HepG2 (cell line): ENCODE measurements at regions of chr1 and their contacts with region 1.

Region 1: DNA sequence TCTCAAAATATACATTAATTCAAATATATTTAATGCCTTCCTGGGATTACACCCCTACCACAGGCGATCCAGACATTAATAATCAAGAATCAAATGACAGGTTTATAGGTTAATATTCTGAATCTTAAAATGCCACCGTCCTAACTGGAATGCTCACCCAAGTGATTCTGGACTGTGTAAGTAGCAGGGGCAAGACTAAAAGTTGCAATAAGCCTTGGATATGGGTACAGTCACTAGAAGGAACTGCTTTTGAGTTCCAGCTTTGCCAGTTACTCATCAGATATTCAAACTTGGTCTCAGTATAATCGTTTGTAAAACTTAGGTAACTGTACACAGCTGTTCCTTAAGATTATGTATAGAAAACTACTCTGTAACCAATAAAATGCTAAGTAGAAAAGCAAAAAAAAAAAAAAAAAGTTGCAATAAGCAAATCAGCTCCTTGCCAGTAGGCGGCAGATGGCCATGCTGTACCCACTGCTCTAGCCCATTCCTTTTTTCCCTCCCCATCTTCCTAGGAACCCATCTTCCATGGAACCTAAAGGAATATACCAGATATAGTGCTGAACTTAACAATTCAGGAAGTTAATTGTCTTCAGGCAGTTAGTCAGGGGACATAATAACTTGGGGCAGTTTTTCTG is 10.5 kb downstream of the RO60 start:
- DNase-seq: no peak
- ATAC-seq: peak; percentile 80
- H3K4me3 ChIP-seq: no peak overlapping the region
- H3K27ac ChIP-seq: no peak overlapping the region
- H3K4me1 ChIP-seq: no peaks in the 10 kb centered on the region
- H3K27me3 ChIP-seq: no peaks in the 10 kb centered on the region
- CTCF ChIP-seq: 0 out of 2 replicates have a peak, but pooled peaks have one; percentile 18
- EP300 ChIP-seq: no peak
- POLR2A ChIP-seq: no peak
- RAD21 ChIP-seq: no peak

Region 2: DNA sequence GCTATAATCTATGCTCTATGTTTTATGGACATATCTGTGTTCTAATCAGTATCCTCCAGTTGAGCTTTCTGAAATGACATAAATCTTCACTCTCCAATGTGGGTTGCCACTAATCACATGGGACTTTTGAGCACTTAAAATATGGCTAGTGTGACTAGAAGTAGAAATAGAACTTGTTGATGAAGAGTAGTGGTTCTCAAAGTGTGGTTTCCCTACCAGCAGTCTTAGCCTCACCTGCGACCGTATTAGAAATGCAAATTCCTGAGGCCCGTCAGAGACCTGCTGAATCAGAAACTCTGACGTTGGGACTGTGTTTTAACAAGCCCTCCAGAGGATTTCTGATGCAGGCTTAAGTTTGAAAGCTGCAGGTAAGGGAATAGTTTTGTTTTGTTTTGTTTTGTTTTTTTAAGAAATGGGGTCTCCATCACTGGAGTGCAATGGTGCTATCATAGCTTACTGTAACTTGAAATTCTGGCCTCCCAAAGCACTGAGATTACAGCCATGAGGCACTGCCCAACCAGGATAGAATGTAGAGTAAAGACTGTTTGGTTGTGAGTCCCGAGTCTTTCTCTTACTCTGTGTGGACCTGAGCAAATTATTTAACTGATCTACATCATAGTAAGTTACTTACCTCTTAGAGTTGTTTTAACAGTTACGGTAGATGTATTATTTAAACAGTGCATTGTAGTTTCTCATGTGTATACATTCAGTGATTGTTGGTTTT is 13.7 kb after region 1 on chr1:
- CTCF ChIA-PET with region 1: no interaction called
- POLR2A ChIA-PET with region 1: no interaction called
- in situ Hi-C with region 1: no loop called
- intact Hi-C with region 1: loop called (anchors 2 kb)
- DNase-seq: no peak
- ATAC-seq: no peak
- H3K4me3 ChIP-seq: no peak overlapping the region
- H3K27ac ChIP-seq: no peak overlapping the region
- H3K4me1 ChIP-seq: no peaks in the 10 kb centered on the region
- H3K27me3 ChIP-seq: no peaks in the 10 kb centered on the region
- CTCF ChIP-seq: no peak
- EP300 ChIP-seq: no peak
- POLR2A ChIP-seq: no peak
- RAD21 ChIP-seq: no peak